Naive thymus-derived CD4-positive, alpha-beta T cell (primary cell): ENCODE measurements at regions of chr19 and their contacts with region 1.

Region 1: GRCh38 chr19:58182989-58183816 is at the start of gene ZNF274:
- DNase-seq: peak; percentile 88 to 95 (median 93)
- ATAC-seq: peak; percentile 92
- H3K4me3 ChIP-seq: peak within 1 kb of the TSS; percentile 87
- H3K4me3 Mint-ChIP-seq: peak within 1 kb of the TSS; percentile 91 to 99 (median 94)
- H3K27ac ChIP-seq: peak within 1 kb of the TSS; percentile 97
- H3K27ac Mint-ChIP-seq: peak within 1 kb of the TSS; percentile 98 to 100 (median 99)
- H3K4me1 ChIP-seq: peaks cover 0 to 12% of the 10 kb centered on the region in 2 donors
- H3K4me1 Mint-ChIP-seq: peaks cover 10 to 24% (median 17%) of the 10 kb centered on the region in 7 donors
- H3K27me3 ChIP-seq: no peaks in the 10 kb centered on the region
- H3K27me3 Mint-ChIP-seq: no peaks in the 10 kb centered on the region
- total RNA-seq, gene ZNF274: 20.1 to 91.1 (median 52.7) TPM

Region 2: GRCh38 chr19:57362997-57363705 is 820.1 kb before region 1 on chr19 and contains the starts of genes TRAPPC2B and ZNF547:
- CTCF ChIA-PET with region 1: no interaction called
- POLR2A ChIA-PET with region 1: interaction called, 3 read pairs
- intact Hi-C with region 1: loop called in 1 of 2 experiments (anchors 1 kb)
- DNase-seq: peak; percentile 89 to 99 (median 98)
- ATAC-seq: peak; percentile 97
- H3K4me3 ChIP-seq: peak within 1 kb of the TSS; percentile 74
- H3K4me3 Mint-ChIP-seq: peak within 1 kb of the TSS; percentile 90 to 97 (median 94)
- H3K27ac ChIP-seq: peak within 1 kb of the TSS; percentile 84
- H3K27ac Mint-ChIP-seq: peak within 1 kb of the TSS; percentile 94 to 100 (median 97)
- H3K4me1 ChIP-seq: peaks cover 9 to 14% of the 10 kb centered on the region in 2 donors
- H3K4me1 Mint-ChIP-seq: peaks cover 12 to 26% (median 18%) of the 10 kb centered on the region in 7 donors
- H3K27me3 ChIP-seq: no peaks in the 10 kb centered on the region
- H3K27me3 Mint-ChIP-seq: peaks cover 0 to 2% (median 0%) of the 10 kb centered on the region in 5 donors
- total RNA-seq, gene TRAPPC2B: 7.7 to 11.8 (median 9.0) TPM
- total RNA-seq, gene ZNF547: 0.40 to 10.1 (median 3.6) TPM

Region 3: DNA sequence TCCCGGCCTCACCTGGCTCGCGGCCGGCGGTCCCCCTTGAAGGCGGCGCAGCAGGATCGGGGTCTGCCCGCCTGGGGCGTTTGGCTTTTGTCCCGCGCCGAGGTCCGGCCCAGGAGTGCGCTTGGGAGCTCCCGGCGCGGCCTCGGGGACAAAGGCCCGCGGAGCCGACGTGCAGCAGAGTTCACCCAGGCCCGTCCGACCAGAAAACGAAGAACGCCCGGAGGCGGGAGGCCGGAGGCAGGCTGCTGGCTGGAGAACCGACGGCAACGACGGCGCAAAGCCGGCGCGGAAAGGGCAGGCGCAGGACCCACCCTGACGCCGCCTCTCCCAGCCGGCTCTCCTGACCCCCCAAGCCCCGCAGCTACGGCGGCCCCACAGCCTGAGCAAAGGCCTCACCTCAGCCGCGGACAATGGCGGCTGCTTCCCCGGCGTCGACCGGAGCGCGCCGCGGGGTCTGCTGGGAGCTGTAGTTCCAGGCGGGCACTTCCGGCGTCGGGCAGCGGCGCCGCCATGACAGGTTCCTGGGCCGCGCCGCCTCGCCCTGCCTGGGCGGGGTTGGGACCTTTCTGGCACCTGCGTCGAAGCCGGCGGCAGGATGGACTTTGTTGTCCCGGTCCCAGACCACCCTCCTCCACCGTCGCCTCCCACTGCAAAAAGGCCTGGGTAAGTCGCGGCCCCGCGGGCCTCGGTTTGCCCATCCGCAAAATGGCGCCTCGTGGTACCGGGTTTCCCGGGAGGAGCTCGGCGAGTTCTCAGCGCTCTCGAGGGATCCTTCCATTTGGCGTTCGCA is 180.6 kb before region 1 on chr19 and contains the start of gene ZNF606:
- CTCF ChIA-PET with region 1: no interaction called
- POLR2A ChIA-PET with region 1: interaction called, 17 read pairs
- intact Hi-C with region 1: loop called (anchors 1 kb)
- DNase-seq: peak; percentile 79 to 87 (median 85)
- ATAC-seq: peak; percentile 100
- H3K4me3 ChIP-seq: peak within 1 kb of the TSS; percentile 91
- H3K4me3 Mint-ChIP-seq: peak within 1 kb of the TSS; percentile 80 to 90 (median 88)
- H3K27ac ChIP-seq: peak within 1 kb of the TSS; percentile 90
- H3K27ac Mint-ChIP-seq: peak within 1 kb of the TSS; percentile 79 to 94 (median 88)
- H3K4me1 ChIP-seq: peaks cover 14 to 18% of the 10 kb centered on the region in 2 donors
- H3K4me1 Mint-ChIP-seq: peaks cover 15 to 40% (median 27%) of the 10 kb centered on the region in 7 donors
- H3K27me3 ChIP-seq: no peaks in the 10 kb centered on the region
- H3K27me3 Mint-ChIP-seq: no peaks in the 10 kb centered on the region
- total RNA-seq, gene ZNF606: 11.9 to 37.5 (median 15.3) TPM

Region 4: DNA sequence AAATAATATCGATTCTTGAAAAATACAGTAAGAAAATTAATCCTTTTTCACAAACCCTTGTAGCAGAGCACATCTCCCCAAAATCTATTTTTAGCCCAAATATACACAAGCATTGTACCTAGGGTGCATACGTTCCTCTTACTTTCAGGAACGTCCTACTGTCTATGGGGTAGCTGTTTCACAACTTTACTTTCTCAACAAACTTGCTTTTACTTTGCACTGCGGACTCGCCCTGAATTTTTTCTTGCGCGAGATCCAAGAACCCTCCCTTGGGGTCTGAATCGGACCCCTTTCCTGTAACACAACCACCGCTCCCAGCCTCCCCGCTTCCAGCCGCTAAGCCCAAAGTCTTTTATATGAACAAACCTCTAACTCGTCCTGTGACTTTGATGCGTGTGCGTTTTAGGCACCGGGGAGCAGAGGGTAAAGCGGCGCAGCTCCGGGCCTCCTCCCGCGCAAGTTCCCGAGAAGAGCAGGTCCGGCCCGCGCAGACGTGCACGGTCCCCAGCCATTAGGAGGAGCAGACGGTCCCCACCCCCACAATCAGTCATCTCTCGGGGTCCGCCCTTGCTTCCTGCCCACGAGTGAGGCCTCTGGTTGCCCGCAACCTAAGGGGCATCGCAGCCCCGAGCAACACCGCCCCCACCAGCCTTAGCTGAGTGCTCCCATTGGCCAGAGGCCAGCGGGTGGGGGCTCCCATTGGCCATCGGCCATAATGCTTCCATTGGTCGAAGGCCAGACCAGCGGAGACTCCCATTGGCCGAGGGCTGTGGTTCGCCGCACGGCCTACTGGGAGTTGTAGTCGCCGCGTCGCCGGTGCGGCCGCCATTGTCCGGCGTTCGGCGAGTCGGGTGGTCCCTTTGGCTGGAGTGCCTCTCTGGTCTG is 95.2 kb after region 1 on chr19 and contains the start of gene ZNF8:
- CTCF ChIA-PET with region 1: no interaction called
- POLR2A ChIA-PET with region 1: interaction called, 19 read pairs
- intact Hi-C with region 1: loop called (anchors 1 kb)
- DNase-seq: peak; percentile 84 to 96 (median 93)
- ATAC-seq: peak; percentile 99
- H3K4me3 ChIP-seq: peak within 1 kb of the TSS; percentile 93
- H3K4me3 Mint-ChIP-seq: peak within 1 kb of the TSS; percentile 89 to 99 (median 95)
- H3K27ac ChIP-seq: peak within 1 kb of the TSS; percentile 80
- H3K27ac Mint-ChIP-seq: peak within 1 kb of the TSS; percentile 88 to 97 (median 96)
- H3K4me1 ChIP-seq: peaks cover 12 to 15% of the 10 kb centered on the region in 2 donors
- H3K4me1 Mint-ChIP-seq: peaks cover 28 to 63% (median 43%) of the 10 kb centered on the region in 7 donors
- H3K27me3 ChIP-seq: no peaks in the 10 kb centered on the region
- H3K27me3 Mint-ChIP-seq: no peaks in the 10 kb centered on the region
- total RNA-seq, gene ZNF8: 5.2 to 10.5 (median 10.0) TPM

Region 5: DNA sequence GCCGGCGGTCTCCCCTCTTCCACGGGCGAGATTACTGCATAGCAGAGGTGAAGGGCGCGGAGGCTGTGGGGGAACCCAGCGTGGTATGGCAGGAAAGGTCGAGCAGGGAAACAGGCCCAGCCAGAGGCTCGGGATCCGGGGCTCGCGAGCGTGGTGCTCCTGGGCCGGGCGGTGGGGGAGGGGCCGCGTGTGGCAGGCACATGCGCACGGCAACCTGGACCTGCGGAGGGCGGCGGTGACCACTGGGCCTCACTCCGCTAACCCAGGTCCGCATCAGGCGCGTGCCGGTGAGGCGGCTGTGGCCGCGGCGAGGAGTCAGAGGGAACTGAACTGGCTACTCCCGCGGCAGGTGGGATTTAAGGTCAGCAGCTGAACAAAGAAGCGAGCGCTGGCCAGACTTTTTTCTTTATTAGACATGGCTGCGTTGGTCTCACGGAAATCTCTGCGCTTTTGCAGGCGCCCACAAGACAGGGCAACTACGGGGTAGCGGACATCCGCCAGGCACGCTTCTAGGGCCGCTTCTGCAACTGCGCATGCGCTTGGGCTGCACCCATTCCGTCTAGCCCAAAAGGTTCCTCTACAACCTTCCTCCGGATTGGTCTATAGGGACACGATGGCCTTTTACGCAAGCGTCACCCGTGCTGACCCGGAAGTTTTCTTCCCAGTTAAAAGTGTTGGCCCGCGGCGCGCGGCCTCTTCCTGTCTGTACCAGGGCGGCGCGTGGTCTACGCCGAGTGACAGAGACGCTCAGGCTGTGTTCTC is 203.6 kb after region 1 on chr19 and contains the start of gene RPS5:
- CTCF ChIA-PET with region 1: no interaction called
- POLR2A ChIA-PET with region 1: interaction called, 5 read pairs
- intact Hi-C with region 1: loop called (anchors 1 kb)
- DNase-seq: peak; percentile 84 to 98 (median 96)
- ATAC-seq: peak; percentile 97
- H3K4me3 ChIP-seq: peak within 1 kb of the TSS; percentile 75
- H3K4me3 Mint-ChIP-seq: peak within 1 kb of the TSS; percentile 89 to 96 (median 94)
- H3K27ac ChIP-seq: peak within 1 kb of the TSS; percentile 94
- H3K27ac Mint-ChIP-seq: peak within 1 kb of the TSS; percentile 94 to 99 (median 97)
- H3K4me1 ChIP-seq: peaks cover 26% of the 10 kb centered on the region in 2 donors
- H3K4me1 Mint-ChIP-seq: peaks cover 22 to 59% (median 45%) of the 10 kb centered on the region in 7 donors
- H3K27me3 ChIP-seq: no peaks in the 10 kb centered on the region
- H3K27me3 Mint-ChIP-seq: peaks cover 0 to 3% (median 0%) of the 10 kb centered on the region in 5 donors
- total RNA-seq, gene RPS5: 911 to 1,684 (median 1,502) TPM

Region 6: GRCh38 chr19:58466760-58467589 is 283.8 kb after region 1 on chr19 and contains the start of gene ZNF324:
- CTCF ChIA-PET with region 1: no interaction called
- POLR2A ChIA-PET with region 1: interaction called, 6 read pairs
- intact Hi-C with region 1: loop called (anchors 1 to 2 kb)
- DNase-seq: peak; percentile 92 to 97 (median 95)
- ATAC-seq: peak; percentile 98
- H3K4me3 ChIP-seq: peak within 1 kb of the TSS; percentile 92
- H3K4me3 Mint-ChIP-seq: peak within 1 kb of the TSS; percentile 80 to 89 (median 86)
- H3K27ac ChIP-seq: peak within 1 kb of the TSS; percentile 99
- H3K27ac Mint-ChIP-seq: peak within 1 kb of the TSS in 8 of 9 donors; percentile 67 to 91 (median 85)
- H3K4me1 ChIP-seq: peaks cover 7 to 11% of the 10 kb centered on the region in 2 donors
- H3K4me1 Mint-ChIP-seq: peaks cover 14 to 27% (median 22%) of the 10 kb centered on the region in 7 donors
- H3K27me3 ChIP-seq: no peaks in the 10 kb centered on the region
- H3K27me3 Mint-ChIP-seq: peaks cover 0 to 3% (median 0%) of the 10 kb centered on the region in 5 donors
- total RNA-seq, gene ZNF324: 14.2 to 28.0 (median 23.4) TPM